ENCODE measurements at regions of chr14 and their contacts with region 1.

Region 1: GRCh38 chr14:81533536-81534343 is at the start of gene SEL1L:
- DNase-seq: peak; percentile 98 to 100 (median 99)

Region 2: DNA sequence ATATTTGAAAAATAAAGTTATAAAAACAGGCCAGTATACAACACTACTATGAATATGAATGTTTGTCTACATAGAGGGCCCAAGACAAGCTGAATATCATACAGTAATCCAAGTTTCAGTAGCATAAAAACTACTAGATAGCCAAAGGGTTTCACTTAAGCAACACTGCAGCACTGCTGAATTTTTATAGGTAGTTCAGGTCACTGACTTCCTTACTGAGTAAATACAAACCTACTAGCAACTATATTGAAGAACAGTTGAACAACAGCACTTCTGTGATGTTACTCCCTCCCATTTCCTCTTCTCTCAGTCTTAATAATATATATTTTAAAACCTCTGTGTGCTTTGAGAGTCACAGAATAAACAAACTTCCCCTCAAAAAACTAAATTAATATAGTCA is 355.7 kb before region 1 on chr14:
- intact Hi-C with region 1: no loop called
- DNase-seq: no peak

Region 3: GRCh38 chr14:81220830-81221578 is 312.7 kb before region 1 on chr14 and contains the start of gene GTF2A1:
- intact Hi-C with region 1: loop called (anchors 5 kb)
- DNase-seq: peak; percentile 89 to 99 (median 94)